ENCODE measurements at regions of chr1 and their contacts with region 1.

Region 1: DNA sequence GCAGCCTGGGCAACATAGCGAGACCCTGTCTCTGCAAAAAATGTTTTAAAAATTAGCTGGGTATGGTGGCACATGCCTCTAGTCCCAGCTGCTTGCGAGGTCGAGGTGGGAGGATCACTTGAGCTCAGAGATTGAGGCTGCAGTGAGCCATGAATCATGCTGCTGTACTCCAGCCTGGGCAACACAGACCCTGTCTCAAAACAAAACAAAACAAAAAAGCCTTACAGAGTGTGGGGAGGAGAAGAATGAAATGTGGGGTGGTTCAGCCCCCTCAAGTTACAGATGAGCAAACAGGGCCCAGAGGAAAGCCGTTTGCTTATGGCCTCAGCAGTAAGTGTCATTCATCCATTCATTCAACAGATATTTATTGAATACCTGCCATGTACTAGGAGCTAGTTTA is 40.7 kb downstream of the RPS6KA1 start:
- DNase-seq: no peak
- H3K4me3 ChIP-seq: no peak overlapping the region
- H3K27ac ChIP-seq: no peak overlapping the region
- H3K4me1 ChIP-seq: no peaks in the 10 kb centered on the region
- H3K27me3 ChIP-seq: no peaks in the 10 kb centered on the region
- CTCF ChIP-seq: no peak
- POLR2A ChIP-seq: no peak

Region 2: DNA sequence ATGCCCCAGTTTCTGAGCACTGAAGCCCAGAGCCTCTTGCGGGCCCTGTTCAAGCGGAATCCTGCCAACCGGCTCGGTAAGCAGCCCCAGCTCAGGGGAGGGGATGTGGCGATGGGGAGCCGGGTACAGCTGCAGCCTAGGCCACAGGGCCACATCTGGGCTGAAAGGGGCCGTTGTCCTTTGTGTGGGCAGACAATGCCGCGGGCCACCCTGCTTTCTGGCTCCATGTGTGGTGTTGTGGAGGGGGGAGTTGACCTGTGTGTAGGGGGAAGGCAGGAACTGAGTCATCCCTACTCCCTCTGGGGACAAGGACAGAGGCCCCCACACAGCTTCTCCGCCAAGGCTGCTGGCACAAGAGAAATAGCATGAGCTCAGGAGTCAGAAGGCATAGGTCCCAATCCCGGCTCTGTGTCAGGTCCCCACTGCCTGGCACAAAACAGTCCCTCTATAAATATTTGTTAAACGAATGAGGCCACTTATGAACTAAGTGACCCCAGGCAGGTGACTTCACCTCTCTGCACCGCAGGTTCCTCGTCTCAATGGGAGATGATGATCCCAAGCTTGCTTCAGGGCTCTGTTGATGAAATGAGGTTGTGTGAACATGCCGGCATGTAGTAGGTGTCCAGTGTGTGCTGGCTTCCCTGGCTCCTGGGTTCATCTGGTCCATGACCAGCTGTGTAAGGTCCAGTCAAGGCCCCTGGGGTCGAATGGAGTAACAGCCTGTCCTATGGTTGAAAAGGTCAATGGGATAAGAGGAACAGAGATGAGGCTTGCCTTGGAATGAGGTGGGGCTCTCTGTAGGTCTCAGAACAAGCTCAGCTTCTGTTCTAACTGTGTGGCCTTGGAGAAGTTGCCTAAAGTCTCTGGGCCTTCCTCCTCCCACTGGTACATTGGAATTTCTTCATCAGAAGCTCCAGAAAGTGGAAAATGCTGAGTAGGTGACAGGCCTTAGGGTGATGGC is 14.5 kb before region 1 on chr1:
- intact Hi-C with region 1: no loop called
- DNase-seq: peak in 1 of 2 donors; percentile 68
- H3K4me3 ChIP-seq: no peak overlapping the region
- H3K27ac ChIP-seq: peak overlapping the region; percentile 73 to 75
- H3K4me1 ChIP-seq: peaks cover 0 to 7% of the 10 kb centered on the region in 2 donors
- H3K27me3 ChIP-seq: no peaks in the 10 kb centered on the region
- CTCF ChIP-seq: no peak
- POLR2A ChIP-seq: no peak

Region 3: GRCh38 chr1:26582836-26583460 is 12.7 kb after region 1 on chr1:
- intact Hi-C with region 1: loop called (anchors 2 kb)
- DNase-seq: peak in 1 of 2 donors; percentile 38
- H3K4me3 ChIP-seq: no peak overlapping the region
- H3K27ac ChIP-seq: no peak overlapping the region
- H3K4me1 ChIP-seq: no peaks in the 10 kb centered on the region
- H3K27me3 ChIP-seq: no peaks in the 10 kb centered on the region
- CTCF ChIP-seq: no peak
- POLR2A ChIP-seq: no peak

Region 4: DNA sequence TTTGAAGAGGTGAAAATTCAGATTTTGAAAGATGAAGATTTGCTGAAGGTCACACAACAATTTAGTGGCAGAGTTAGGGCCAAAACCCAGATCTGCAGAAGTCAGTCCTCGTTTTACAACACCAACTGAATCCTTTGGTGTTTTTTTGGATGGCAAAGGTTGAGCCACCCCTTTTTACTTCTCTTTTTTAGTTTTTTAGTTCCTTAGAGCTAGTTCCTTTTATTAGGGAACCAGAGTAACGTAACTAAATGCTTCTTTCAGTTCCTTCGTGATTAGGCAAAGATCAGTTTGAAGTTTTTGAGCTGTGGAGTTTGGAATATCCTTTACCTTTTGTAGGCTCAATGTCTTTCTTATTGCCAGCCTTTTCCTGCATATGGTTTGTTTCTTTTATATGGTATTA is 57.7 kb after region 1 on chr1:
- intact Hi-C with region 1: no loop called
- DNase-seq: no peak
- H3K4me3 ChIP-seq: no peak overlapping the region
- H3K27ac ChIP-seq: no peak overlapping the region
- H3K4me1 ChIP-seq: no peaks in the 10 kb centered on the region
- H3K27me3 ChIP-seq: no peaks in the 10 kb centered on the region
- CTCF ChIP-seq: no peak
- POLR2A ChIP-seq: no peak

Region 5: DNA sequence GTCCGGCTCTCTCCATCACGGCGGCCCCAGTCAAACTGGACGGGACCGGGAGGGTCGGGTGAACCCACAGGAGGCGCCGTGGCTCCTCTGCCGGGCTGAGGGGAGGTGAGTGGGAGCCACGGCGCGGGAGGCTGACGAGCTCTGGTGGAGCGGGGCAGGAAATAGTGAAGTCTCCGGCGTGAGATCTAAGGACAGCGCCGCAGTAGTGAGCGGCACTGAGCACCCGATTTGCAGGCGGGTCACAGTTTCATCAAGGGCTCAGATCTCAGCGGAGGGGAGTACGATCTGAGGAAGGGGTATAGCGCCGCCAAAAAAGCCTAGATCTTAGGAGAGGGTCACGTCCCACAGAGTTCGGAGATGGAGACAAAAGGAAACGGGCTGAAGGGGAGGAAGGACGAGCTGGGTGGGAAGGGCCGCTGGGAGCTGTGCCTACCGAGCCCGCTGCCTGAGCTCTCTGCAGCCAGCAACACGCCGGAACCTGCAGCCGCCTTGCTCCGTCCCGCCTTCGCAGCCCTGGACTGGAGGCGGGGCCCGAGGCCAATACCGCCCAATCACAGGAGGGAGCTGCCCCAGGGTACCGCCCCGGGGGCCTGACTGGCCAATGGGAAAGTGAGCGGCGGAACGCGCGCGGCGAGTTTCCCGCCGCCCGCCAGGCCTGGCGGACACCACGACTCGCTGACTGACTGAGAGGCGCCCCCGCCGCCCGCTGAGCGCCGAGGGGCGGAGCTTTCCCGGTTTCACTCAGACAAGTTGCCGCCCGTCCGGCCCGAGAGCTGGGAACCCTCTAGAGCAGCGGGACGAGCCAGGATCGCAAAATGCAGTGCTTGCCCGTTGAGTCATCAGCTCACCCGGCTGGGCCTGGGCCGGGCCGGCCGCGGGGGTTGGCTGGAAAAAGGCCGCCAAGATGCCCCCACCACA is 294.6 kb after region 1 on chr1:
- intact Hi-C with region 1: no loop called
- DNase-seq: peak; percentile 99
- H3K4me3 ChIP-seq: peak overlapping the region; percentile 51 to 68 (median 66)
- H3K27ac ChIP-seq: peak overlapping the region; percentile 94 to 99
- H3K4me1 ChIP-seq: no peaks in the 10 kb centered on the region
- H3K27me3 ChIP-seq: no peaks in the 10 kb centered on the region
- CTCF ChIP-seq: no peak
- POLR2A ChIP-seq: peak; percentile 68

Measured in breast epithelium (tissue), 4 donors.